K562 (cell line): ENCODE measurements at regions of chr10 and their contacts with region 1.

Region 1: GRCh38 chr10:48444266-48444665 is 137.8 kb downstream of the MAPK8 start:
- DNase-seq: peak in 2 of 4 experiments; percentile 46 to 67
- ATAC-seq: peak; percentile 57
- H3K4me3 ChIP-seq: no peak overlapping the region
- H3K27ac ChIP-seq: no peak overlapping the region
- H3K4me1 ChIP-seq: peaks cover 0 to 16% of the 10 kb centered on the region in 2 experiments
- H3K27me3 ChIP-seq: no peaks in the 10 kb centered on the region
- CTCF ChIP-seq: peak; percentile 65 to 80 (median 67)
- EP300 ChIP-seq: no peak
- POLR2A ChIP-seq: no peak
- RAD21 ChIP-seq: peak; percentile 94 to 98

Region 2: GRCh38 chr10:48400129-48400849 is 44.0 kb before region 1 on chr10:
- CTCF ChIA-PET with region 1: no interaction called
- POLR2A ChIA-PET with region 1: no interaction called
- in situ Hi-C with region 1: no loop called
- intact Hi-C with region 1: no loop called
- DNase-seq: peak in 1 of 4 experiments; percentile 58
- ATAC-seq: peak; percentile 73
- H3K4me3 ChIP-seq: no peak overlapping the region
- H3K27ac ChIP-seq: no peak overlapping the region; the same call in 2 of the 3 replicates
- H3K4me1 ChIP-seq: peaks cover 8 to 21% of the 10 kb centered on the region in 2 experiments
- H3K27me3 ChIP-seq: no peaks in the 10 kb centered on the region
- CTCF ChIP-seq: no peak
- EP300 ChIP-seq: no peak
- POLR2A ChIP-seq: no peak
- RAD21 ChIP-seq: no peak

Region 3: DNA sequence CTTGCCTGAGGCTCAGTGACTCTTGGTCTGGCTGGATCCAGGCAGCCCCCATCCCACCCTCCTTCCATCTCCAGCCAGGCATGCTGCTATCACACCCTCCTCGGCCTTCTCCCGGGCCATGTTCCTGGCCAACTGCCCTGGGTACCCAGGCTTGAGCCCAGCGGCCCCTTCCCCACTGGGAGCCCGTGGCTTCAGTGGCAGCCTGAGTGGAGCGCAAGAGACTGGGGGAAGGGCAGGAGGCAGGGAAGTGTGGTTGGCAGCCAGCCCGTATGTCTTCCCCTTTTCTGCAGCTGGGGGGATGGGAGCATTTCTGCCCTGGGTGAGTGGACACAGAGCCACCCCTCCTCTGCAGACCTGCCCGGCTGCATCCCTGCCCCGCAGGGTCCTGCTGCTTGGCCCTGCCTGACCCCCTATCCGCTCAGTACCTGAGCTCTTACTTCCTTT is 12.1 kb after region 1 on chr10:
- CTCF ChIA-PET with region 1: no interaction called
- POLR2A ChIA-PET with region 1: interaction called, 17 read pairs
- in situ Hi-C with region 1: no loop called
- intact Hi-C with region 1: no loop called
- DNase-seq: peak; percentile 68 to 81 (median 74)
- ATAC-seq: peak; percentile 80
- H3K4me3 ChIP-seq: no peak overlapping the region
- H3K27ac ChIP-seq: peak overlapping the region; percentile 62; the same call in 2 of the 3 replicates
- H3K4me1 ChIP-seq: peaks cover 56 to 69% of the 10 kb centered on the region in 2 experiments
- H3K27me3 ChIP-seq: no peaks in the 10 kb centered on the region
- CTCF ChIP-seq: 0 out of 6 replicates have a peak, but pooled peaks of 1 of the 3 experiments have one; percentile 8
- EP300 ChIP-seq: peak; percentile 46
- POLR2A ChIP-seq: no peak
- RAD21 ChIP-seq: peak; percentile 17 to 37; a peak in 3 of 4 replicates